Transverse colon (tissue), 4 donors: ENCODE measurements at regions of chr22 and their contacts with region 1.

Region 1: GRCh38 chr22:29291215-29291614 is 15.2 kb upstream of the GAS2L1 start:
- DNase-seq: no peak
- H3K4me3 ChIP-seq: no peak overlapping the region
- H3K27ac ChIP-seq: no peak overlapping the region
- H3K4me1 ChIP-seq: peaks cover 0 to 4% (median 0%) of the 10 kb centered on the region in 4 donors
- H3K27me3 ChIP-seq: no peaks in the 10 kb centered on the region
- CTCF ChIP-seq: no peak
- EP300 ChIP-seq: no peak
- POLR2A ChIP-seq: no peak

Region 2: DNA sequence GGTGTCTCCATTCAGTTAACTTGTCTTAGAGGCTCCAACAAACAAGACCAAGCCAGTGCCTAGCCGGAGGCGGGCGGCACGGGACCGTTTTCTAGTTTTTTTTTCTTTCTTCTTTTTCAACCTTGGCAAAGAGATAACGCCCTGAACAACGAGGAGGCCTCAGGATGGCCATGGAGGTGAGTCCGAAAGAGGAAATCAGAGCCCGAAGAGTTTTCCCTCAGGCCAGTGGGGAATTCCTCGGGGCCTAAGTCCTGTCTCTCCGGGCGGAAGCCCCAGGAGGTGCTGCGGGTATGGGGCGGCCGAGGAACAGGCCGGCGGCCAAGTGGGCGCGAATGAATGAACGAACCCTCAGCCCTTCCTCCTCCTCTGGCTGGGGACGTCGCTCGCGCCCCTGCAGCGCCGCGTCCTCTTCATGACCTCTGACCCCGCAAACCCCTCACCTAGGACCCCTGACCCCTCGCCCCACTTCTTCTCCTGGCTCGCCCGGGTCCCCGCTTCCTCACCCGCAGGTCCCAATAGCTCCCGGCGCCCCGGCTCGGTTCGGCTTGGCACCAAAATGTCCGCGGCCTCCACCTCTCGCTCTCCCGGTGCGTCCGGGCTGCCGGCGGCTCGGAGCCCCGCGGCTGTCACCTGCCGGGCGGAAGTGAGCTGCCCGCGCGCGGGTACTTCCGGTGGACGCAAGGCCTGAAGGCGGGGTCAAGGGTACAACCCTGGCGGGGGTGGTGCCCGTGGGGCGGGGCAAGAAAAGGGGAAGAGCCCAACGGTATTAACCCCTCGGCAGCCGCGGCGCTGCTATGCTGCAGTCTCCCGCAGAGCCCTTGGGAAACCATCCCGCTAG is 96.9 kb after region 1 on chr22 and contains the start of gene AP1B1:
- in situ Hi-C with region 1: loop called in 1 of 4 experiments (anchors 25 kb)
- intact Hi-C with region 1: no loop called
- DNase-seq: peak; percentile 97
- H3K4me3 ChIP-seq: peak within 1 kb of the TSS; percentile 57 to 83 (median 74)
- H3K27ac ChIP-seq: peak within 1 kb of the TSS; percentile 83 to 93 (median 88)
- H3K4me1 ChIP-seq: peaks cover 6 to 53% (median 43%) of the 10 kb centered on the region in 4 donors
- H3K27me3 ChIP-seq: no peaks in the 10 kb centered on the region
- CTCF ChIP-seq: peak in 1 of 5 experiments; percentile 19
- EP300 ChIP-seq: no peak
- POLR2A ChIP-seq: peak; percentile 87
- total RNA-seq, gene AP1B1: 45.6 to 107 (median 92.4) TPM